ENCODE measurements at regions of chr6 and their contacts with region 1.

Region 1: GRCh38 chr6:25017932-25018567 is 82.3 kb upstream of the RIPOR2 start:
- DNase-seq: peak; percentile 91
- ATAC-seq: peak; percentile 78
- H3K4me3 Mint-ChIP-seq: peak overlapping the region; percentile 1
- H3K27ac Mint-ChIP-seq: peak overlapping the region; percentile 74
- H3K4me1 Mint-ChIP-seq: peaks cover 55% of the 10 kb centered on the region
- H3K27me3 Mint-ChIP-seq: no peaks in the 10 kb centered on the region

Region 2: DNA sequence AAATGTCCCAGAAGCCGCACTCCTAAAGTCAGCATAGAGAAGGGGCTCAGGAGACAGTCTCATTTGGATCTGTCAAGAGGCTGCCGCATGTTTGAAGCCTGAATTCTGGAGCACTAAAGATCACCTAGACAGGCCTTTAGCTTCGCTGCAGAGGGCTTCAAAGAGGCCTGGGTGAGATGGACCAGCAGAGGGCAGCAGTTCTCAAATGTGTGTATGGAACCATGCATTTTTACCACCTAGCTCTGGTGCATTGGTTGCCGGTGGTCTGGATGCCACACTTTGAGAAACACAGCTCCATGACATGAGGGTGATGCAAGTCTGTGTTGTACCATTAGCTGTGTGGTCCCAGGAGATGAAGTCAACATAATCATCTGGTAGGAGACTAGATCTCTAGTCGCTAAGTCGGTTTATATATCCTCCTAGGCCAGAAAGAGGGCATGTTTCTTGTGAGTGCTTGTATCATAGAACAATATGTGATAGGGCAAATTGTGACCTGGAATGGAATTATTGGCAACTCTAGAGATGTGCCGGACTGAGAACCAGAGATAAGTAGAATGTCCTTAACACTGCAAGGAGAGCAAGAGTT is 436.9 kb before region 1 on chr6:
- CTCF ChIA-PET with region 1: interaction called, 13 read pairs
- POLR2A ChIA-PET with region 1: no interaction called
- intact Hi-C with region 1: loop called (anchors 1 to 2 kb)
- DNase-seq: peak; percentile 89
- ATAC-seq: peak; percentile 94
- H3K4me3 Mint-ChIP-seq: no peak overlapping the region
- H3K27ac Mint-ChIP-seq: no peak overlapping the region
- H3K4me1 Mint-ChIP-seq: peaks cover 3% of the 10 kb centered on the region
- H3K27me3 Mint-ChIP-seq: no peaks in the 10 kb centered on the region

Region 3: DNA sequence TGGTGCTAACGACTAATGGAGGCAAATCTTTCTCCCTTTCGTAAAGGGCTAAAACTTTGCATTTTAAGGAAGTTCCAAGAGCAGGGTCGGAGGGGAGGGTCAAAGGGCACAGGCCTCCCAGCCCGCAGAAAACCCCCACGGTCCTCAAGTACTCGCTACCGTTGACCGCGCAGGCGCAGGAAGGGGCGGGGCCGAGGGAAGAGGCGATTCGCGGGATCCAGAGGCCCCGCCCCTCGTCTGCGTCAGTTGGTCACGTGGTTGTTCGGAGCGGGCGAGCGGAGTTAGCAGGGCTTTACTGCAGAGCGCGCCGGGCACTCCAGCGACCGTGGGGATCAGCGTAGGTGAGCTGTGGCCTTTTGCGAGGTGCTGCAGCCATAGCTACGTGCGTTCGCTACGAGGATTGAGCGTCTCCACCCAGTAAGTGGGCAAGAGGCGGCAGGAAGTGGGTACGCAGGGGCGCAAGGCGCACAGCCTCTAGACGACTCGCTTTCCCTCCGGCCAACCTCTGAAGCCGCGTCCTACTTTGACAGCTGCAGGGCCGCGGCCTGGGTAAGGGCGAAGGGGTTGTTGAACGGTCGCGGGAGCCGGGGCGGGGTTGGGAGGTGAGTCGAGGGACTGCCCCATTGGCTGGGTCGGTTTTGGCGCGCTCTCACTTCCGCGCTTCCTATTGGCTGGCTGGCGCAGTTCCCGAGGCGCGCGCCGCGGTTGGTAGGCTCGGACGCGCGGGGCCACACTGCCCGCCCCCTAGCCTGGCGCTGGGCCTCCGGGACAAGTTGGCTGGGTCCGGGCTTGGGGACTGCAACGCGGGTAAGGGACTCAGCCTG is 243.1 kb before region 1 on chr6 and contains the start of gene GMNN:
- CTCF ChIA-PET with region 1: interaction called, 7 read pairs
- POLR2A ChIA-PET with region 1: interaction called, 5 read pairs
- intact Hi-C with region 1: loop called (anchors 2 to 5 kb)
- DNase-seq: peak; percentile 99
- ATAC-seq: peak; percentile 93
- H3K4me3 Mint-ChIP-seq: peak within 1 kb of the TSS; percentile 98
- H3K27ac Mint-ChIP-seq: peak within 1 kb of the TSS; percentile 99
- H3K4me1 Mint-ChIP-seq: peaks cover 26% of the 10 kb centered on the region
- H3K27me3 Mint-ChIP-seq: no peaks in the 10 kb centered on the region
- total RNA-seq, gene GMNN: 74.0 to 76.1 TPM

Region 4: GRCh38 chr6:24867104-24867703 is 150.8 kb before region 1 on chr6:
- CTCF ChIA-PET with region 1: interaction called, 14 read pairs
- POLR2A ChIA-PET with region 1: no interaction called
- intact Hi-C with region 1: no loop called
- DNase-seq: no peak
- ATAC-seq: peak; percentile 43
- H3K4me3 Mint-ChIP-seq: no peak overlapping the region
- H3K27ac Mint-ChIP-seq: peak overlapping the region; percentile 74
- H3K4me1 Mint-ChIP-seq: peaks cover 69% of the 10 kb centered on the region
- H3K27me3 Mint-ChIP-seq: no peaks in the 10 kb centered on the region

Region 5: GRCh38 chr6:24910961-24911712 is 106.9 kb before region 1 on chr6:
- CTCF ChIA-PET with region 1: interaction called, 11 read pairs
- POLR2A ChIA-PET with region 1: interaction called, 5 read pairs
- intact Hi-C with region 1: no loop called
- DNase-seq: peak; percentile 80
- ATAC-seq: peak; percentile 8
- H3K4me3 Mint-ChIP-seq: peak overlapping the region; percentile 85
- H3K27ac Mint-ChIP-seq: peak overlapping the region; percentile 90
- H3K4me1 Mint-ChIP-seq: peaks cover 83% of the 10 kb centered on the region
- H3K27me3 Mint-ChIP-seq: no peaks in the 10 kb centered on the region

Region 6: GRCh38 chr6:25042036-25042521 is 24.0 kb after region 1 on chr6:
- CTCF ChIA-PET with region 1: interaction called, 14 read pairs
- POLR2A ChIA-PET with region 1: no interaction called
- intact Hi-C with region 1: no loop called
- DNase-seq: peak; percentile 70
- ATAC-seq: peak; percentile 60
- H3K4me3 Mint-ChIP-seq: peak overlapping the region; percentile 91
- H3K27ac Mint-ChIP-seq: peak overlapping the region; percentile 98
- H3K4me1 Mint-ChIP-seq: peaks cover 69% of the 10 kb centered on the region
- H3K27me3 Mint-ChIP-seq: no peaks in the 10 kb centered on the region

Region 7: GRCh38 chr6:25122001-25122400 is 104.0 kb after region 1 on chr6:
- CTCF ChIA-PET with region 1: no interaction called
- POLR2A ChIA-PET with region 1: no interaction called
- intact Hi-C with region 1: no loop called
- DNase-seq: no peak
- ATAC-seq: no peak
- H3K4me3 Mint-ChIP-seq: no peak overlapping the region
- H3K27ac Mint-ChIP-seq: no peak overlapping the region
- H3K4me1 Mint-ChIP-seq: peaks cover 31% of the 10 kb centered on the region
- H3K27me3 Mint-ChIP-seq: no peaks in the 10 kb centered on the region